Gastrocnemius medialis (tissue), 4 donors: ENCODE measurements at regions of chr7 and their contacts with region 1.

Region 1: DNA sequence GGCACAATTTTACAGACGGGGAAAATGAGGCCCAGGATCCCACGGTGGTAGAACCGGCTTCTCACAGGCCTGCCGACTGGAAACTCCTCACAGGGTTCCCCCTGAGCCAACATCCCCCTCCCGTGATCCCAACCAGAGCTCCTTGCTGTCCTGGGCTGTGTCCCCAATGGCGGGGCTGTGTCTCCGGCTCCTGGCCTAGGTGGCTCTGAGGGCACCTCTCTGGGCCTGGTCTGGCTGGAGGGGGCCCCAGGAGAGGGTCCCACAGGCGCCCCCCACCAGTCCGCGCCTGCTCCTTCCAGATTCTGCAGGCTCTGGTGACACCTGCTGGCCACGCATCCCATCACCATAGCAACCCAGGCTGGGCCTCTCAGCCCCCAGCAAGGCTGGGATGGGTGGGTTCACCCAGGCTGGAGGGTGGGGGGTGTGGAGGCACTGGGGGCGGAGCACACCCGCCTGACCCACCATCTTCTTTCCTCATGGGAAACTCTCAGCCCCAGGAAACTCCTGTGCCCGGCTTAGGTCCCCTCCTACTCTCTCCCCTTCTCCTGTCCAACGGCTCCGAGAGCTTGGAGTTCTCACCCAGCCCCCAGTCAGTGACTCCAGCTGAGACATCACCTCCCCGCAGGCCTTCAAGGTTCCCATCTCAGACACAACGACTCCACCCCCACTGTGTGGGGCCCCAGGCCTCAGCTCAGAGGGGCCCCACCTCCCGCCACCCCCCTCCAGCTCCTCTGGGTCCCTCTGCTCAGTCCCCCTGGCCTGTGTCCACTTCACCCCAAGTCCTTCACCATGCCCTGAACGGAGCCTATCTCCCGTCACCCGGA is 27.1 kb upstream of the TNRC18 start:
- DNase-seq: no peak
- ATAC-seq: peak; percentile 31 to 50
- H3K4me3 ChIP-seq: no peak overlapping the region
- H3K27ac ChIP-seq: no peak overlapping the region
- H3K4me1 ChIP-seq: peaks cover 0 to 4% of the 10 kb centered on the region in 2 donors
- H3K27me3 ChIP-seq: no peaks in the 10 kb centered on the region
- CTCF ChIP-seq: peak; percentile 54 to 85 (median 72)
- POLR2A ChIP-seq: no peak

Region 2: GRCh38 chr7:5231811-5232484 is 218.8 kb before region 1 on chr7:
- in situ Hi-C with region 1: loop called in 3 of 4 experiments (anchors 10 to 25 kb)
- intact Hi-C with region 1: no loop called
- DNase-seq: no peak
- ATAC-seq: no peak
- H3K4me3 ChIP-seq: no peak overlapping the region
- H3K27ac ChIP-seq: no peak overlapping the region
- H3K4me1 ChIP-seq: no peaks in the 10 kb centered on the region
- H3K27me3 ChIP-seq: no peaks in the 10 kb centered on the region
- CTCF ChIP-seq: no peak
- POLR2A ChIP-seq: no peak

Region 3: DNA sequence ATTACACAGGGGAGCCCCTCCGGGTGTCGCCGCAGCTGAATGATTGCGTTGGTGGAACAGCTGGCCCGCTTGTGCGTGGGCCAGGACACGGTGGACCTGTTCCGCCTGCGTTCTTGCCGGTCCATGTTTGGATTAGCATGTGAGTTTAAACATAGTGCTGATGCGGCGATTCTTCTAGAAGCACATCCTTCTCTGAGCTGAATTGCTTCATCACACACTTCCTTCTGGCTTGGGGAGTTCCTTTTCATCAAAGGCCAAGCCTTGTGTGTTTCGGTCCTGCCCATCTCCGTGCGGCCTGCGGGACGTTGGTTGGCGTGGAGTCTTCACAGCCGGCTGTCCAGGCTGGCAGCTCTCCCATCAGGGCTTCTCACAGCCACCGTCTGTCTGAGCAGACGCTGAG is 213.5 kb before region 1 on chr7:
- in situ Hi-C with region 1: loop called (anchors 10 to 25 kb)
- intact Hi-C with region 1: loop called (anchors 2 kb)
- DNase-seq: peak; percentile 44 to 58
- ATAC-seq: peak; percentile 52 to 55
- H3K4me3 ChIP-seq: peak overlapping the region in 1 of 4 donors; percentile 17
- H3K27ac ChIP-seq: peak overlapping the region in 1 of 4 donors; percentile 7
- H3K4me1 ChIP-seq: peaks cover 5 to 10% of the 10 kb centered on the region in 2 donors
- H3K27me3 ChIP-seq: peaks cover 0 to 5% (median 0%) of the 10 kb centered on the region in 3 donors
- CTCF ChIP-seq: no peak
- POLR2A ChIP-seq: peak; percentile 13 to 34

Region 4: DNA sequence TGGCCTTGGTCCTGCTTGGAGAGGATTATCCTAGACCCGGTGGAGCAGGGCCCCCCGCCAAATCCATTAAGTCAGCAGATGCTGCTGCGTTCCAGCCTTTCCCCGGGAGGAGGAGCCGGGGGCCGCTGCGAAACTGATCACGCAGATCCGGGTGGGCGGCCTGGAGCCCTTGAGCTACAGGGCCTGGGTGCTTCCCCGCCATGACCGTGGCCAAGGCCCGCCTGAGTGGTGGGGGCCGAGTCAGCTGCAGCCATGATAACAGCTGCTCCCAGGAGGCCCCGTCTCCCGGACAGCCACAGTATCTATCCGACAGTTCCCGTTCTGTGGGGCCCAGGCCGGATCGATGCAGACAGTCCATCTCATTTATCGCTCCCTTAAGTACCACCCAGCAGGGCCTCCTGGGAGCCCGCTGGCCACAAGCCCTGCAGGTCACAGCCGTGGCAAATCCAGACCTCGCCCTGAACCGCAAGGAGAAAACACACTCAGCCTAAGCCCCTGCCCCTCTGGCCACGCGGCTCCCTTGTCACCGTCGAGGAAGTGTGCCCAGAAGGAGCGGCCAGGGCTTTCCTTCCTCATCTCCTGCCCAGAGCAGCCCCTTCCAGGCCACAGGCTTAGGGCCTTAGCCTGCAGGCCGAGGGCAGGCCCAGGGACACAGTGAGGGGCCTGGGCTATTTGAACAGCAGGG is 202.4 kb before region 1 on chr7:
- in situ Hi-C with region 1: loop called in 3 of 4 experiments (anchors 10 to 25 kb)
- intact Hi-C with region 1: no loop called
- DNase-seq: no peak
- ATAC-seq: no peak
- H3K4me3 ChIP-seq: no peak overlapping the region
- H3K27ac ChIP-seq: no peak overlapping the region
- H3K4me1 ChIP-seq: no peaks in the 10 kb centered on the region
- H3K27me3 ChIP-seq: no peaks in the 10 kb centered on the region
- CTCF ChIP-seq: no peak
- POLR2A ChIP-seq: no peak

Region 5: DNA sequence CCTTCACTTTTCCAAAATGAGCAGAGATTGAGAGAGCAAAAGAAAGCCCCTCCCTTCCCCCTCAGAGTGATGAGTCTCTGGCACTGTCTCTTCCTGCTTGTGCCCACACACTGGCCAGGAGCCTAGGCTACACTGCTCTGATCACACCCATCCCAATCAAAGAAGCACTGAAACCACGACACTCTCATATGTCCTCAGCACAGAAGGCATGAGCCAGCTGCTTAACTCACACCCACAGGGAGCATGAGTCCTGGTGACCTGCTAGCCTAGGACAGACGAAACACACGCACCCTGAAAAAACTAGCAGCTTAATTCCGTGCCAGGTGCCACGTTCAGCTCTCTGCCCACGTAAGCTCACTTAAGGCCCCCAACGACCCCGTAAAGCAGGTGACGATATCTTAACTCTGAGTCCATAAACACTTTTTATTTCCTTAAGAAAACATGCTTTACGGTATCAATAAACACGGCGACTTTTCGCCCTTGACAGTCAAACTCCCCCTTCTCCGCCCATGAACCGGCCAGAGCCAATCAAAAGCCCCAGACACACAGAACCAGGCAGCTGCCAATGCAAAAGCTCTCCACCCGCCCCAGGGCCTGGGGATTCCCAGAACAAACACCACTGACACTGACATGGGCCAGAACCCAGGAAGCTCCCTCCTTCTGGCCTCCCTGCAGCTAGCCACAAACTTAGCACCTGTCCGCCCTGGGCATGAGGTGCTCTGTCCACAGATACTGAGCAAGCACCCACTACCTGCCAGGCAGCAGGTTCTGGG is 96.1 kb before region 1 on chr7:
- in situ Hi-C with region 1: loop called in 1 of 4 experiments (anchors 5 kb)
- intact Hi-C with region 1: no loop called
- DNase-seq: peak; percentile 46 to 70
- ATAC-seq: peak; percentile 86 to 88
- H3K4me3 ChIP-seq: peak overlapping the region in 3 of 4 donors; percentile 22 to 30 (median 25)
- H3K27ac ChIP-seq: peak overlapping the region; percentile 70 to 80 (median 73)
- H3K4me1 ChIP-seq: peaks cover 17 to 19% of the 10 kb centered on the region in 2 donors
- H3K27me3 ChIP-seq: no peaks in the 10 kb centered on the region
- CTCF ChIP-seq: no peak
- POLR2A ChIP-seq: no peak

Region 6: GRCh38 chr7:5363729-5364128 is 87.0 kb before region 1 on chr7:
- in situ Hi-C with region 1: loop called in 3 of 4 experiments (anchors 5 to 10 kb)
- intact Hi-C with region 1: loop called (anchors 1 kb)
- DNase-seq: no peak
- ATAC-seq: no peak
- H3K4me3 ChIP-seq: no peak overlapping the region
- H3K27ac ChIP-seq: no peak overlapping the region
- H3K4me1 ChIP-seq: peaks cover 0 to 4% of the 10 kb centered on the region in 2 donors
- H3K27me3 ChIP-seq: no peaks in the 10 kb centered on the region
- CTCF ChIP-seq: no peak
- POLR2A ChIP-seq: no peak

Region 7: DNA sequence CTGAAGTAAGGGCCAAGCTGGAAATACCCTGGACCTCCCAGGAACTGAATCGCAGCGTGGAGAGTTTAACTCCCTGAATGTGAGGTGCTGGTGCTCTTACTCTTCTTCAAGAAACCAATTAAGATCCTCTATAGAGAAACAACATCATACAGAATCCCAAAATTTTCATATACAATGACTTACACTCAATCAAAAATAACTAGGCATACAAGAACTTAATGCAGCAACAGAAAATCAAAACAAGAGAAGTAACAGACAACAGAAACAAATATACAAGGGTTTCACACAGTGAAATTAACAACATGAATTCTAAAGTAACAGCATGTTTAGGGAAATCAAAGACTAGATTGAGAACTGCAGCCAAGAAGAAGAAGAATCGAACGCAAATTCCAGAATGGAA is 293.0 kb after region 1 on chr7:
- in situ Hi-C with region 1: no loop called
- intact Hi-C with region 1: no loop called
- DNase-seq: no peak
- ATAC-seq: no peak
- H3K4me3 ChIP-seq: no peak overlapping the region
- H3K27ac ChIP-seq: no peak overlapping the region
- H3K4me1 ChIP-seq: no peaks in the 10 kb centered on the region
- H3K27me3 ChIP-seq: no peaks in the 10 kb centered on the region
- CTCF ChIP-seq: no peak
- POLR2A ChIP-seq: no peak